ENCODE measurements at regions of chr10 and their contacts with region 1.

Region 1: GRCh38 chr10:13087986-13088618 is 11.9 kb upstream of the OPTN start:
- DNase-seq: peak in 1 of 2 donors; percentile 34
- H3K4me3 ChIP-seq: no peak overlapping the region
- H3K27ac ChIP-seq: peak overlapping the region; percentile 12 to 69
- H3K4me1 ChIP-seq: peaks cover 0 to 28% (median 7%) of the 10 kb centered on the region in 4 donors
- H3K27me3 ChIP-seq: no peaks in the 10 kb centered on the region
- CTCF ChIP-seq: no peak

Region 2: GRCh38 chr10:12252882-12253546 is 835.1 kb before region 1 on chr10:
- intact Hi-C with region 1: loop called (anchors 10 kb)
- DNase-seq: no peak
- H3K4me3 ChIP-seq: no peak overlapping the region
- H3K27ac ChIP-seq: no peak overlapping the region
- H3K4me1 ChIP-seq: no peaks in the 10 kb centered on the region
- H3K27me3 ChIP-seq: no peaks in the 10 kb centered on the region
- CTCF ChIP-seq: no peak

Region 3: GRCh38 chr10:12835709-12836108 is 252.4 kb before region 1 on chr10:
- intact Hi-C with region 1: no loop called
- DNase-seq: peak in 1 of 2 donors; percentile 75
- H3K4me3 ChIP-seq: no peak overlapping the region
- H3K27ac ChIP-seq: no peak overlapping the region
- H3K4me1 ChIP-seq: peaks cover 0 to 23% (median 8%) of the 10 kb centered on the region in 4 donors
- H3K27me3 ChIP-seq: no peaks in the 10 kb centered on the region
- CTCF ChIP-seq: no peak